GM18951 (cell line): ENCODE measurements at regions of chr6 and their contacts with region 1.

Region 1: DNA sequence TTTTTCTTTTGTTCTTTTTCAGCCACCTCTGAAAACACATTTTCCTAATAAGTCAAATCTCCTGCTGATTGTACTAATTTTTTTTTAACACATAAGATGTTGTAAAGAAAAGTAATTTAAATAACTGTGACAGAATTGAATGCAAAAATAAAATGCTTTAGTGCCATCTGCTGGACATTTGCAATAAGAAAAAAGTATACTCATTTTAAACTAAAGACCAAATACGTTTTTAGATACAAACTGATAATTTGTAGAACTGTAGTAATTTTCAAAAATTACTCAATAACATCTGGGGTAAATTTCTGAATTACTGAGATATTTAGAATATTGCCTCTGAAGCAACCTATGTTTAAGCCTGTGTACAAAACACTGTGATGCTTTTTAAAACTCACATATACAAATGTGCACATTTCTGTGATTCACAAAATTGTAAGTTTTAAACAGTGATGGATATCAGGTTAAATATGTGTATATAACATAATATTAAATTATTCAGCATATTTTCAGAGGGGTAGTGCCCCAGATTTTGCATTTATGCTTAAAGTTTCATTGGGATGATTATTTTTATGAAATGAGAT is 198.7 kb downstream of the RIMS1 start:
- POLR2A ChIP-seq: no peak

Region 2: DNA sequence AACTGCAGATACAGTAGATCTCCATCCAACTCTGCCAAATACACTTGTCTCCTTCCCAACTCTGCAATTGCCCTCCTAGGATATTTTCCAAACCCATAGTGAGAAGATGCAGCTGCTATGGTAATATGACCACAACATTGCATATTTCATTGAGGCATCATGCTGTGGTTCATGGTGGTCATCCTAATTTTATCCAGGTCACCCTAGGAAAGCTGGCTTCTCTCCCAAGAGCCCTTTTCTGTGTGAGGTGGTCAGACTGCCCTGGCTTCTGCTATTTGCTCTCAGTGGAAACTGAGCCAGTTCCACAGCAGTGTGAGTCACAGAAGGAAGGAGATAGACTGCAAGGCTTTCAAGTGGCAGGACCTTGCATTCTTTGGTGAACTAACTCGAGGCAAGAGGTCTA is 791.0 kb before region 1 on chr6:
- in situ Hi-C with region 1: no loop called
- POLR2A ChIP-seq: no peak

Region 3: GRCh38 chr6:71383901-71384489 is 701.1 kb before region 1 on chr6:
- in situ Hi-C with region 1: loop called (anchors 25 kb)
- POLR2A ChIP-seq: no peak

Region 4: GRCh38 chr6:71533939-71534379 is 551.1 kb before region 1 on chr6:
- in situ Hi-C with region 1: loop called (anchors 25 kb)
- POLR2A ChIP-seq: no peak